Sigmoid colon (tissue), 7 donors: ENCODE measurements at regions of chr11 and their contacts with region 1.

Region 1: GRCh38 chr11:59668950-59669610 is at the start of gene PATL1:
- DNase-seq: peak; percentile 100
- H3K4me3 ChIP-seq: peak within 1 kb of the TSS; percentile 81 to 96 (median 91)
- H3K27ac ChIP-seq: peak within 1 kb of the TSS; percentile 91 to 95 (median 94)
- H3K4me1 ChIP-seq: peaks cover 0 to 32% (median 26%) of the 10 kb centered on the region in 4 donors
- H3K27me3 ChIP-seq: no peaks in the 10 kb centered on the region
- CTCF ChIP-seq: no peak
- EP300 ChIP-seq: peak in 3 of 4 donors; percentile 50 to 86 (median 61)
- POLR2A ChIP-seq: peak; percentile 83 to 88
- total RNA-seq, gene PATL1: 11.0 to 16.9 (median 12.3) TPM

Region 2: DNA sequence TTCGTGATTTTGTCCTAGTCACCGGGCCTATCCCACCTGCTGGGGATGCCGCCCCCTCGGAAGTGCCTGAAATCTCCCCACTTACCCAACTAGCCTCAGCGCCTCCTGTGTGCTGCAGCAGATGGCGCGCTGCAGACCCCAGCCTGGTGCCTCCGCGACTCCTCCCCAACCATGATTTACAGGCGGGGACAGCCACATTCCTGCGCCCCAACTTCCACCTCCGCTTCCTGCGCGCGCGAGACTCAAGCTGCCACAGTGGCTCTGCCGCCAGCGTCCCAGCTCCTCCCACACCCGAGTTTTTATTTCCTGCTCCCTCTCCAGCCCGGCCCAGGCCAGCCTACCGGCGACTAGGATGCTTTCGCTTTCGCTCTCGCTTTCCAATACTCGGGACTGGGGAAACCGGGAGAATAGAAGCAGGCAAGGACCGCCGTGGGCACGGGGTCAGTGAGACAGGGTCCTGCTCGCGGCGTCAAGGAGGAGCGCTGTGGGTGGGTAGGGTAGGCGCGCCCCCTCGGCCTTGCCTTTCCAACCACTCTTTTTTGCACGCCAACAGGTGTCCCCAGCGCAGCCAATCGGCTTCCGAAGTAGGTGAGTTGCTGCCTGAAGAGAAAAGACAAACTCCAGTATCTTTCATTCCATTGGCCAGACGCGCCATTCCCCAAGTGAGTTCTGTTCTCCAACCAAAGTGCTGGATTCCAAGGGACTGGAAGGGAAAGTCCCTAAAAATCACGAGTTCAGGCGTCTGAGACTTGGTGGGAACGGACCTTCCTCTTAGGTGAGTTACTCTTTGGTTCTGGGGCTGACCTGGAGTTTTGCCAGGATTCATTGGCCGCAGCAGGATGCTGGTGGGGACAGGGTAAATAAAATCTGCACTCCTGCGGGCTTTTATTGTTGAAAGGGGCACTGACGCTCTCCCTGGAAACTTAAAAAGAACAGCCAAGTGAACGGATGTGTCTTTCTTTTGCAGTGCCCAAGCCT is 526.3 kb before region 1 on chr11 and contains the start of gene FAM111A:
- intact Hi-C with region 1: loop called (anchors 10 kb)
- DNase-seq: peak; percentile 94
- H3K4me3 ChIP-seq: peak within 1 kb of the TSS; percentile 66 to 83 (median 75)
- H3K27ac ChIP-seq: peak within 1 kb of the TSS; percentile 86 to 95 (median 89)
- H3K4me1 ChIP-seq: peaks cover 0 to 30% (median 22%) of the 10 kb centered on the region in 4 donors
- H3K27me3 ChIP-seq: no peaks in the 10 kb centered on the region
- CTCF ChIP-seq: no peak
- EP300 ChIP-seq: no peak
- POLR2A ChIP-seq: no peak
- total RNA-seq, gene FAM111A: 26.0 to 33.4 (median 29.0) TPM

Region 3: GRCh38 chr11:59542142-59542810 is 126.8 kb before region 1 on chr11:
- intact Hi-C with region 1: loop called (anchors 2 kb)
- DNase-seq: no peak
- H3K4me3 ChIP-seq: no peak overlapping the region
- H3K27ac ChIP-seq: no peak overlapping the region
- H3K4me1 ChIP-seq: peaks cover 0 to 8% (median 6%) of the 10 kb centered on the region in 4 donors
- H3K27me3 ChIP-seq: no peaks in the 10 kb centered on the region
- CTCF ChIP-seq: no peak
- EP300 ChIP-seq: no peak
- POLR2A ChIP-seq: no peak

Region 4: DNA sequence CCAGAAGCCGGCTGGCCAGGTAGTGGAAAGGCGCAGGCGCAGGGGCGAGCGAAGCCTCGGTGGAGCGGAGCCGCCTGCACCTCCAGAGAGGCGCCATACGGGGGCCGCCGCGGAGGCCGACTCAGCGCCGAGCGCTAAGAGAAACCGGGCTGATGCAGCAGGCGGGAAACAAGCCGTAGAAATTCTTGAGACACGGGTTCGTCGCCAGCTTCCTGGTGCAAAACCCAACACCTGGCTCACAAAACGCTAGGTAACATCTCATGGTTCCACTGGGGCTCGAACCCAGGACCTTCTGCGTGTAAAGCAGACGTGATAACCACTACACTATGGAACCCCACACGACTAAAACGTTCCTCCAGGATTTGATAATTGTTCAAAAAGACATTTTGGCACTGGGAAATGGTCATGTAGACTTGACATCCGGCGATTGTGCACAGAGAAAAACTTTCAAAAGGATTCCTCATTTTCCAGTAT is 118.7 kb before region 1 on chr11:
- intact Hi-C with region 1: loop called (anchors 2 kb)
- DNase-seq: peak; percentile 91
- H3K4me3 ChIP-seq: peak overlapping the region; percentile 46 to 55 (median 52)
- H3K27ac ChIP-seq: peak overlapping the region; percentile 80 to 87 (median 82)
- H3K4me1 ChIP-seq: peaks cover 0 to 13% (median 3%) of the 10 kb centered on the region in 4 donors
- H3K27me3 ChIP-seq: no peaks in the 10 kb centered on the region
- CTCF ChIP-seq: peak; percentile 46 to 76 (median 54)
- EP300 ChIP-seq: no peak
- POLR2A ChIP-seq: no peak

Region 5: DNA sequence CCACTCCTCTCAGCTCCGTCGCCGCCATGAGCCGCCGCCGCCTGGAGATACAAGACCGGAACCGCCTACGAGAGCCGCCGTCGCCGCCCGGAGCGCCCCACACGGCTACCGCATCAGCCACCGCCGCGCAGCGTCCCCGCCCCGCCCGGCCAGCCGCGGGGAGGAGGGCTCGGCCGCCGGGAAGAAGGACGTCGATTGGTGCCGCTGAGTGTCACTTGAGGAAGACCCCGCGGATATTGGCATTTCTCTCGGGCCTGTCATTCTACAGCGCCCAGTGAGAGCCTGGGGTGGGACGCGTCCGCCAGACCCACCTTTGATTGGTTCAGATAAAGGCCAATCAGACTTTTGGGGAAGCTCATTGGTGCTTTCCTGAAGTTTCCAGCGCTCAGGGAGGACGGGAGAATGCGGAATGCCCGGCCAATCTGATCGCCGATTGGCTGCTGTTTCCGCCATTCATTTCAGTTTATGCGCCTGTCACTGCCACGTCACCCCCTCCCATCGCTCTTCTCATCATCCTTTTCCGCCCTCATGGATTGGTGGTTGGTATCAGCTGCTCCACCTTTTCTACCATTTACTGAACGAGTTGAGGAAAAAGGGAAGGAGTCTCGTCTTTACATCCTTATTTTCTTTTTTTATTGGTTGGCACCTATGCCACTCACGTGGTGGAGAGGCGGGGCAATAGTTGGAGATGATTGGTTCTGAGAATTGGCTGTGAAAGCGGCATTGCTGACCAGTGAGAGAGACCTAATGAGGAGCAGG is 53.3 kb before region 1 on chr11 and contains the start of gene OSBP:
- intact Hi-C with region 1: loop called (anchors 1 kb)
- DNase-seq: peak; percentile 100
- H3K4me3 ChIP-seq: peak within 1 kb of the TSS; percentile 75 to 88 (median 86)
- H3K27ac ChIP-seq: peak within 1 kb of the TSS; percentile 92 to 97 (median 94)
- H3K4me1 ChIP-seq: peaks cover 0 to 43% (median 33%) of the 10 kb centered on the region in 4 donors
- H3K27me3 ChIP-seq: no peaks in the 10 kb centered on the region
- CTCF ChIP-seq: no peak
- EP300 ChIP-seq: no peak
- POLR2A ChIP-seq: peak in 1 of 2 donors; percentile 61
- total RNA-seq, gene OSBP: 27.5 to 41.5 (median 30.0) TPM

Region 6: GRCh38 chr11:59802639-59803176 is 133.6 kb after region 1 on chr11:
- intact Hi-C with region 1: loop called (anchors 5 kb)
- DNase-seq: no peak
- H3K4me3 ChIP-seq: no peak overlapping the region
- H3K27ac ChIP-seq: peak overlapping the region in 1 of 4 donors; percentile 35
- H3K4me1 ChIP-seq: no peaks in the 10 kb centered on the region
- H3K27me3 ChIP-seq: no peaks in the 10 kb centered on the region
- CTCF ChIP-seq: peak; percentile 25 to 72 (median 54)
- EP300 ChIP-seq: no peak
- POLR2A ChIP-seq: no peak

Region 7: GRCh38 chr11:59866397-59866796 is 197.3 kb after region 1 on chr11 and contains the start of gene TCN1:
- intact Hi-C with region 1: no loop called
- DNase-seq: no peak
- H3K4me3 ChIP-seq: no peak within 1 kb of the TSS
- H3K27ac ChIP-seq: no peak within 1 kb of the TSS
- H3K4me1 ChIP-seq: no peaks in the 10 kb centered on the region
- H3K27me3 ChIP-seq: no peaks in the 10 kb centered on the region
- CTCF ChIP-seq: no peak
- EP300 ChIP-seq: no peak
- POLR2A ChIP-seq: no peak
- total RNA-seq, gene TCN1: not detected